HCT116 (cell line): ENCODE measurements at regions of chr11 and their contacts with region 1.

Region 1: DNA sequence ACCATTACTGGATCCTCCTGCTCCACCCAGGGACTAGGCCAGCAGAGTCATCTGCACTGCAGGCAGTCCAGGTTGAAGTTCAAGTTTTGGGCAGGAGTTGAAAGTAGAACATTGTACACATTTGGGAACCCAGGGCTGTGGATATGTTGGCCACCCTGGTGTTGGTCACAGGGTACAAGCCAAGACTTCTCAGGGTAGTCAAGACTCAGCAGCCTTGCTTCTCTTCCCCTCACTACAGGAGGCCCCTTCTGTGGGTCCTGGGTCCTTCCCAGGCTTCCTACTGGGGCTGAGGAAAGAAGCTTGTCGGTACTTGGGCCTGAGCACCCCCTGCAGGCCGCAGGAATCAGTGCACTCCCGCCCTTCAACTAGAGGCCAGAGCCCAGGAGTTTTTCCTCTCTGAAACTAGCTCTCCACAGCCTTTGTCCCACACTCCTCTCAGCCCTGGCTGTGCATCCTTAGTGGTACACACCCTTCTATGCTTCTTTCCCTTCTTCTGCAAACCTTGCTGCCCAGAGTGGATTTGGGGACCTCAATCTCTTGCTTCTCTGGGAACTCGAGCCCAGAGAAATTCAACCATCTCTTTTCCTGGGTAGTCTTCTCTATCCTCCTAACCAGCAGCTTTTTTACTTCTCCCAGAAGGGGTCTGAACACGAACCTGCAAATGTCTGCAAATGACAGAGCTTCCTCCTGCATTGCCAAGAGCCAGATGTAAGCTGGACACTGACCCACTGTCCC is 2.6 kb upstream of the HPX start:
- DNase-seq: no peak
- ATAC-seq: peak; percentile 93
- H3K4me3 ChIP-seq: no peak overlapping the region
- H3K27ac ChIP-seq: no peak overlapping the region
- H3K4me1 ChIP-seq: no peaks in the 10 kb centered on the region
- H3K27me3 ChIP-seq: no peaks in the 10 kb centered on the region
- CTCF ChIP-seq: peak; percentile 68 to 89 (median 87)
- POLR2A ChIP-seq: no peak
- RAD21 ChIP-seq: peak; percentile 79

Region 2: DNA sequence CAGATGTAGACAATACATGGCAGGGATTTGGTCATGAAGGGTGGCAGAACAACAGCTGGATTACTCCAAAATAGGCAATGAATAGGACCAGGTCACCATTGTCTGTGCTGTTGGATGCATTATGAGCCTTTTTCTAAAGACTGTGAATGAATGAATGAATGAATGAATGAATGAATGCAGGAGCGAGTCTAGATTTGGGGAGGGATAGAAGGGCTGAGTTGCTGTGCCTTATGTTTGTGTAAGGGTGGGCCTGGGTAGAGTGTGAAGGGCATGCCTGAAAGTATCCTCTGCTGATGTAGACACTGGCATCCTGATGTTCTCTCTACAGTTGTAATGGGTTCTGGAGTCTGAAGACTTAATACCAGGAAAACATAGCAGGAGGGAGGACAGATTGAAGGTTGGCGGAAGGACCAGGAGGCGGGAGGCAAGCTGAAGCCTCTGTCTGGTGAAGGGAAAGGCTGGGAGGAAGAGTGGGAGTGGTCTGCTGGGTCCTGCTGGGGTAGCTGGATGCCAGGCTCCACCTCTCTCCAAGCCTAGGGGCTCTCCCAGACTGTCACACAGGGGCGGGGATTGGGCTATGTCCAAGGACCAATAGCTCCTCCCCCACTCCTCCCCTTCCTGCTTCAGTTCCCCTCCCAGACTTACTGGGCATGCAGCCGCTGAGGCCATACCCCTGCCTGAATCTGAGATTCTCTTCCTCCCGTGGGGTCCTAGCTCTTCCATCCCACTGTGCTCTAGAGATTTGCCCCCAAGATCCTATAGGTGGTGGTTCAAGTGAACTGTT is 25.5 kb after region 1 on chr11:
- CTCF ChIA-PET with region 1: interaction called, 11 read pairs
- POLR2A ChIA-PET with region 1: no interaction called
- RAD21 ChIA-PET with region 1: no interaction called
- intact Hi-C with region 1: no loop called
- DNase-seq: peak; percentile 60
- ATAC-seq: peak; percentile 77
- H3K4me3 ChIP-seq: no peak overlapping the region
- H3K27ac ChIP-seq: no peak overlapping the region; the same call in 1 of the 2 replicates
- H3K4me1 ChIP-seq: peaks cover 4 to 20% of the 10 kb centered on the region in 2 experiments; a peak in 3 of 4 replicates
- H3K27me3 ChIP-seq: no peaks in the 10 kb centered on the region
- CTCF ChIP-seq: no peak
- POLR2A ChIP-seq: peak; percentile 58
- RAD21 ChIP-seq: no peak

Region 3: DNA sequence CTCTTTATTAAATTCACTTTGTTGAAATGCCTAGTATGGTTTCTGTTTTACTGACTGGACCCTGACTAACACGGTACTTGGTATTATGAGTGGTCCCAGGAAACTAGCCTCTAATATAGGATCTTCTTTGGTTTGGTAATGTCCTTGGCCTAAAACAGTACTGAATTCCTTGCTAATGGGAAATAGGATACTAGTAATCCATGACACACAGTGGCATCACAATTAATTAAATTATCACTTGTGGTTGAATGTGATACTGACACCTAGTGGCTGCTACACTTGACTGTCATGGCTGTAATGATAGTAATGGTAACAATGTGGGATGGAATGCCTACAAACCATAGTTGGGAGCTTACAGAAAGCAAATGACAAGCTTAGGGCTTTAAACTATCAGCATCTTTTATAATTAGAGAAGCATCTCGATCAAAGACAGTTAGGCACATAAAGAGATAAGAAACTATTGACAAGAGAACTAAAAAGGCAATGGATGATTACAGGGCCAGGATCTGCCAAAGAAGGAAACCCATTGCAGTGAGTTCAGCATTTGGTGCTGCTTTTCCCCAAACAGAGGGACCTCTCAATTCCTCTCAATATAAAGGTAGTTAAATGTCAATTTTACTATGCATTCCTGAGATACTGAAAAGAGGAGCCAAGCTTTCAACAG is 62.3 kb after region 1 on chr11:
- CTCF ChIA-PET with region 1: interaction called, 14 read pairs
- POLR2A ChIA-PET with region 1: no interaction called
- RAD21 ChIA-PET with region 1: no interaction called
- intact Hi-C with region 1: loop called (anchors 1 kb)
- DNase-seq: peak; percentile 40
- ATAC-seq: peak; percentile 94
- H3K4me3 ChIP-seq: no peak overlapping the region
- H3K27ac ChIP-seq: no peak overlapping the region
- H3K4me1 ChIP-seq: peaks cover 0 to 7% of the 10 kb centered on the region in 2 experiments; a peak in 2 of 4 replicates
- H3K27me3 ChIP-seq: no peaks in the 10 kb centered on the region
- CTCF ChIP-seq: peak; percentile 73 to 92 (median 74)
- POLR2A ChIP-seq: no peak
- RAD21 ChIP-seq: peak; percentile 75